T-cell (primary cell): ENCODE measurements at regions of chr13 and their contacts with region 1.

Region 1: GRCh38 chr13:32669030-32669646 is 82.9 kb downstream of the PDS5B start:
- DNase-seq: peak in 7 of 35 experiments; percentile 6 to 67 (median 9)
- ATAC-seq: peak in 1 of 4 experiments; percentile 50
- H3K4me3 ChIP-seq: no peak overlapping the region
- H3K4me3 Mint-ChIP-seq: no peak overlapping the region
- H3K27ac ChIP-seq: no peak overlapping the region
- H3K27ac Mint-ChIP-seq: no peak overlapping the region
- H3K4me1 ChIP-seq: no peaks in the 10 kb centered on the region
- H3K4me1 Mint-ChIP-seq: peaks cover 12 to 19% (median 12%) of the 10 kb centered on the region in 3 donors
- H3K27me3 ChIP-seq: no peaks in the 10 kb centered on the region
- H3K27me3 Mint-ChIP-seq: no peaks in the 10 kb centered on the region

Region 2: DNA sequence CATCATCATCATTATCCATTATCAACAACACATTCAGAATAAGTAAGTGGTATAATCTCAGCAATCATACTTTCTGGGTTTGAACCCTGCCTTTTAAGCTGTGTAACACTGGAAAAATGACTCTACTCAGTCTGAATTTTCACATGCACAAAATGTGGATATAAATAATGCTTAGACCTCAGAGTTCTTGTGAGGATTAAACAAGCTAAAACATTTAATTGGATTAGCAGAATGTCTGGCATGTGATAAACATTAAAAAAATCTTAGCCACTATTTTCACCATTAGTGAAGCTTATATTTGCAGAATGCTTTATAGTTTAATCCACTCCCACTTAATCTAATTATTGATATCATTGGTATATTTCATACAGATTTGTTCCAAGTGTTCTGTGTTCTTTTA is 1561.1 kb after region 1 on chr13:
- CTCF ChIA-PET with region 1: no interaction called
- POLR2A ChIA-PET with region 1: interaction called in 1 of 2 experiments, 10 read pairs
- DNase-seq: no peak
- ATAC-seq: no peak
- H3K4me3 ChIP-seq: no peak overlapping the region
- H3K4me3 Mint-ChIP-seq: no peak overlapping the region
- H3K27ac ChIP-seq: no peak overlapping the region
- H3K27ac Mint-ChIP-seq: no peak overlapping the region
- H3K4me1 ChIP-seq: no peaks in the 10 kb centered on the region
- H3K4me1 Mint-ChIP-seq: no peaks in the 10 kb centered on the region
- H3K27me3 ChIP-seq: no peaks in the 10 kb centered on the region
- H3K27me3 Mint-ChIP-seq: no peaks in the 10 kb centered on the region